SK-N-SH (cell line): ENCODE measurements at regions of chr3 and their contacts with region 1.

Region 1: DNA sequence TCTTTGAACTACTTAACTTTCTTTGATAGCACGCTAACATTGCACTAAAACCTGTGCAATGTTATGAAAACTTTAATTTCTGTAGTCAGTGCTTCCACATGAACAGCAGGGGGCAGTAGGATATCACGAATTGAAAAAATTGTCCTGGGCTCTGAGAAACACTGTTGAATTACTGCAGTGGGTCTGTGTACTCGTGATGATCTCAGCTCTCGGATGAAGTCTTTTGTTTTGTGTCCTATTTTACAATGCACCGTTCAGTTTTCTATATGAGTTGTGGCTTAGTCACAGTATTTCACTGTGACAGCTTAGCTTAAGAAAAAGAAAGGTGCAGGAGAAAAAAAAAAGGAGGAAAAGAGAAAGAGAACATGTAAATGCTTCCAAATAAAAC is 141.3 kb upstream of the CCDC54 start:
- DNase-seq: peak; percentile 75
- H3K4me3 ChIP-seq: peak overlapping the region; percentile 37 to 53
- H3K27ac ChIP-seq: peak overlapping the region; percentile 45 to 62; a peak in 3 of 4 replicates
- H3K4me1 ChIP-seq: peaks cover 0 to 10% of the 10 kb centered on the region in 2 experiments; a peak in 2 of 4 replicates
- H3K27me3 ChIP-seq: no peaks in the 10 kb centered on the region
- CTCF ChIP-seq: peak; percentile 95
- EP300 ChIP-seq: no peak
- RAD21 ChIP-seq: peak; percentile 99

Region 2: DNA sequence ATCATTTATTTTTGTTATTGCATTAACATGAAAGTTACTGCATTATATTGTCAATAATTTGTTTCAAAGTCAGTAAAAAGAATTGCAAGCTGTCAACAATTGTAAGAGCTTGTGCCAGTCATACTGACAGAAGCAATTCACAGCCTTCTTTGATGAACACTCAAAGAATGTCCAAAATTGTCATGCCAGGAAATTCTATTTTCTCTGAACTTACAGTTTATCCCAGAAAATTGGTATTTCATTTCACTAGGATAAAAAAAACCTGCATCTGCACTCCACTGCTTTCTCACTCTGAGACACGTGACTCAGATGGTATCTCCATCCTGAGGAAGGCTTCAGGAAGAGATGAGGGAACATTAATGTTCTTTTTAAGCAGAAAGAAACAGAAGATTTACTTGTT is 191.2 kb before region 1 on chr3:
- CTCF ChIA-PET with region 1: no interaction called
- POLR2A ChIA-PET with region 1: no interaction called
- DNase-seq: no peak
- H3K4me3 ChIP-seq: no peak overlapping the region
- H3K27ac ChIP-seq: no peak overlapping the region
- H3K4me1 ChIP-seq: no peaks in the 10 kb centered on the region
- H3K27me3 ChIP-seq: no peaks in the 10 kb centered on the region
- CTCF ChIP-seq: no peak
- EP300 ChIP-seq: no peak
- RAD21 ChIP-seq: no peak

Region 3: GRCh38 chr3:107124885-107125284 is 111.0 kb before region 1 on chr3:
- CTCF ChIA-PET with region 1: no interaction called
- POLR2A ChIA-PET with region 1: no interaction called
- DNase-seq: no peak
- H3K4me3 ChIP-seq: no peak overlapping the region
- H3K27ac ChIP-seq: no peak overlapping the region
- H3K4me1 ChIP-seq: peaks cover 0 to 2% of the 10 kb centered on the region in 2 experiments; a peak in 1 of 4 replicates
- H3K27me3 ChIP-seq: no peaks in the 10 kb centered on the region
- CTCF ChIP-seq: no peak
- EP300 ChIP-seq: no peak
- RAD21 ChIP-seq: no peak

Region 4: DNA sequence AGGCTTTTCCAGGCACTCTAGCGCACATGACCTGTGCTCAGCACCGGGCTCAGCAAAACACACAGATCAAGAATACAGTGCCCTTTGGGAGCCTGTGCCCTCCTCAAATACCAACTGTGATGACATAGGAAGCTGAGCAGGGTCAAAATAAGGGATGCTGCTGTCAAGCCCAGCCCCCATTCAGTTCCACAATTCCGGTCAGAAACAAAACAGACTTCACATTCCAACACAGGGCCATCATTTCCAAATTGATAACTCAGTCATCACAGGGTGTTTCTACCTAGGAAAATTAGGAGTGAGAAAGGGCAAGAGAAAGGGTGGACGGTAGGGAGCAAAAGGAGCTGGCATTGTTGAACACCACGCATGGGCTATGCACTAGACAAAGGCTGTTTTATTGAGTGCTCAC is 17.1 kb before region 1 on chr3:
- CTCF ChIA-PET with region 1: interaction called, 13 read pairs
- POLR2A ChIA-PET with region 1: no interaction called
- DNase-seq: no peak
- H3K4me3 ChIP-seq: no peak overlapping the region
- H3K27ac ChIP-seq: peak overlapping the region; percentile 12 to 15; a peak in 2 of 4 replicates
- H3K4me1 ChIP-seq: peaks cover 0 to 17% of the 10 kb centered on the region in 2 experiments; a peak in 3 of 4 replicates
- H3K27me3 ChIP-seq: no peaks in the 10 kb centered on the region
- CTCF ChIP-seq: no peak
- EP300 ChIP-seq: peak in 1 of 2 experiments; percentile 22; a peak in 1 of 4 replicates
- RAD21 ChIP-seq: no peak

Region 5: GRCh38 chr3:107249132-107249531 is 13.2 kb after region 1 on chr3:
- CTCF ChIA-PET with region 1: interaction called, 10 read pairs
- POLR2A ChIA-PET with region 1: no interaction called
- DNase-seq: no peak
- H3K4me3 ChIP-seq: no peak overlapping the region
- H3K27ac ChIP-seq: no peak overlapping the region
- H3K4me1 ChIP-seq: peaks cover 0 to 2% of the 10 kb centered on the region in 2 experiments; a peak in 1 of 4 replicates
- H3K27me3 ChIP-seq: no peaks in the 10 kb centered on the region
- CTCF ChIP-seq: no peak
- EP300 ChIP-seq: no peak
- RAD21 ChIP-seq: no peak